Activated naive CD4-positive, alpha-beta T cell treated with anti-CD3 and anti-CD28 coated beads, Interleukin-2, amount 10 ng/mL, durations not matched to agents 7 days and 5 days (primary cell): ENCODE measurements at regions of chr22 and their contacts with region 1.

Region 1: DNA sequence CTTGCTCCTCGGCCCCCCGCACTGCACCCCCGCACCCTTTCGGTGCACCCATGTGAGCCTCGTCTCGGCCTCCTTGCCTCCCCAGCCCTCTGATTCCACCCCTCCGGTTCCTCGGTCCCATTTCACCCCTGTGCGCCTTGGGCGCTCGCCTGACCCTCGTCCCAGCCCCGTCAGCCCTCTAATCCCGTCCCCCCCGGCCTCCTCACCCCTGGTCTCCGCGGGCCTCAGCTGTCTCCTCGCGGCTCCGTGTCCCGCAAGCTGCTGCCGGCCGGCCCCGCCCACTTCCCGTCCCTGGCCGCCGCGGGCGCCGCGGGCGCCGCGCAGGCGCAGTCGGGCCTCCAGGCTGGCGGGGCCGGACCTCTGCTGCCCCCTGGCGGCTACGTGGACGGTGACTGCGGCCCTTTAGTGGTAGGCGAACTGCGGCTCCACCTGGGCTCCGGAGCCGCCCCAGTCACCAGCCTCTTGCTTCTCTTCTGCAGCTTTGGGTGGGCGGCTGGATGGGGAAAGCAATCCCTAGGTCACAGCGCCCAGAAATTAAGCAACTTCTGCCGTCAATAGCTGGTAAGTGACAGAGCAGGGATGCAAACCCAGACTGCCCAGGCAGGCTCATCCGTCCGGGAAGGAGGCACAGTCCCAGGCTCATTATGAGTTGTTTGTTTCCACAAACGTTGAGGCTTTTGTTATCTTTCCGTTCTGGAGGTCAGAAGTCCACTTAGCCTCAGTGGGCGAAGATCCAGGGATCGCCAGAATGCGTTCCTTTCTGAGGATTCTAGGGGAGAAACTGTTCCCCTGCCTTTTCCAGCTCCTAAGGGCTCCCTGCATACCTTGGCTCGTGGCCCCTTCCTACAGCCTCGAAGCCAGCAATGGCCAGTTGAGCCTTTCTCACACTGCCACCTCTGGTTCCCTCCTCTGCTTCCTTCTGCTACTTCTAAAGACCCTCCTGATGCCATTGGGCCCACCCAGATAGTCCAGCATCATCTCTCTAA is at the start of gene PPM1F:
- DNase-seq: peak; percentile 91
- H3K4me3 Mint-ChIP-seq: peak within 1 kb of the TSS; percentile 82
- H3K27ac Mint-ChIP-seq: peak within 1 kb of the TSS; percentile 75
- H3K4me1 Mint-ChIP-seq: peaks cover 16% of the 10 kb centered on the region
- H3K27me3 Mint-ChIP-seq: peaks cover 27% of the 10 kb centered on the region

Region 2: DNA sequence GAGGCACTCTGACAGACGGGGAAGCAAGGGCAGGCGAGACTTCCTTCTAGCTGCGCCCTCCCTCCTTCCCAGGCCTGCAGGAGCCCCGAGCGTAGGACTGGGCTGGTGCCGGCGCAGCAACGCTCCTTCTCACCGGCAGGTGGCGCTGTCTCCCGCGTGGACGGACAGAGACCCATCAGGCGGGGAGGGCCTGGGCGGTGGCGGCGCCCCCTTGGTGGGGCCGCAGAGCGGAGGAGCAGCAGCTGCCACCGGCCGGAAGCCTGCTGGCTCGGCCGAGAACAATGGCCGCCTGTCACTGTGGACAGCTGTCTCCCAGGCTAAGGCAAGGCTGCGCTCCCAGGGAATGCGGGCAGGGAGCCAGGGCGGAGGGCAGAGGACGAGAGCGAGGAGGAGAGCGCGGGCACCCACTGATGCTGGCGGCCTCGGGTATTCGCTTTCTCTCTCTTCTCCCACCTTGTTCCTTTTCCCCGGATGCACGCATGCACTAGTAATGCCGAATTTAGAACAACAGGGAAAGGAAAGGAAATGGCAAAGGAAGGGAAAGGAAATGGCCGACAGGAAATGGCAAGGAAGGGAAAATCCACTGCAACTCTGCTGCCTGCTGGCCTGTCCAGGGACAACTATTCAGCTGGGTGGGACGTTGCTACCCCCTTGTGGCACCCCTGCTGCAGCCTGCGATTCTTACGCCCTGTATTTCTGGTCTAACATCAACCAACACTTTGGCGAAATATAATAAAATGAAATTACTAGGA is 14.6 kb before region 1 on chr22:
- CTCF ChIA-PET with region 1: interaction called, 46 read pairs
- DNase-seq: peak; percentile 94
- H3K4me3 Mint-ChIP-seq: peak overlapping the region; percentile 67
- H3K27ac Mint-ChIP-seq: peak overlapping the region; percentile 60
- H3K4me1 Mint-ChIP-seq: peaks cover 50% of the 10 kb centered on the region
- H3K27me3 Mint-ChIP-seq: no peaks in the 10 kb centered on the region